B cell (primary cell): ENCODE measurements at regions of chr5 and their contacts with region 1.

Region 1: DNA sequence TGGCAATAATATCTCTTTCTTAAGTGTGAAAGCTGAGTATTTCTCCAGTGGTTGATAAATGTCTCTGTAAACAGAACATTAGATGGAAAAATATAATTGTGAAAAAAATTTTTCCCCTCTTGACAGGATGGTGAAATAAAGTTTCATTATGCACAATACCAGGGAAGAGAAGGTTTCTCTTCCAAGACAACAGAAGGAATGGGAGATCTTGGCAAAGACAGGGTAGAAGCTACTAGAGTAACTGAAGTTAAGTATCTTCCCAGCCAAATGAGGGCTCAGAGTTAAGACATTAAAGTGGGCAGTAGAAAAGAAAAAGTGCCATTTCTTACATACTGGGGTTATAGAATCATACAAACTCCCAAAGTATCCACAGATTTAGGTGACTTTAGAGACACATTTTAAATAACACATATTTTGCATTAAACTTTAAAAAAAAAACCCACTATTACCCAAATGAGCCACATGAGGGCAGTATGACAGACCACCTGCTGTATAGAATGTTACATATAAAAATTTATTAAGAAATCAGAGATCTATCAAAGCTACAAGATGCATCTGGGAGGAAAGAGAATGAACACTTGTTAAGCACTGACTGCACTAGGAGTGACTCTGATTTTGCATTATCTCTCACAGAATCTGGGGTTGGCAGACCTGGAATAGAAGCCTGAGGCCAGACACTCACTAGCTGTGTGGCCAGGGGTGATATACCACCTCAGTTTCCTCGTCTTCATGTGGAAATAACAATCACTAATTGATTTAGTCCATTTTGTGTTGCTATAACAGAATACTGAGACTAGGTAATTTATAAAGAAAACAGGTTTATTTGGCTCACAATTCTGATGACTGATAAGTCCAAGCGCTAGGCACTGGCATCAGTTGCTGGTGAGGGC is 98.5 kb downstream of the ARSB start:
- DNase-seq: peak; percentile 38
- ATAC-seq: no peak
- H3K4me3 ChIP-seq: no peak overlapping the region
- H3K4me3 Mint-ChIP-seq: no peak overlapping the region
- H3K27ac ChIP-seq: no peak overlapping the region
- H3K27ac Mint-ChIP-seq: peak overlapping the region; percentile 60
- H3K4me1 ChIP-seq: peaks cover 24 to 36% of the 10 kb centered on the region in 2 donors
- H3K4me1 Mint-ChIP-seq: peaks cover 36% of the 10 kb centered on the region
- H3K27me3 ChIP-seq: no peaks in the 10 kb centered on the region
- H3K27me3 Mint-ChIP-seq: no peaks in the 10 kb centered on the region
- CTCF ChIP-seq: peak; percentile 69

Region 2: DNA sequence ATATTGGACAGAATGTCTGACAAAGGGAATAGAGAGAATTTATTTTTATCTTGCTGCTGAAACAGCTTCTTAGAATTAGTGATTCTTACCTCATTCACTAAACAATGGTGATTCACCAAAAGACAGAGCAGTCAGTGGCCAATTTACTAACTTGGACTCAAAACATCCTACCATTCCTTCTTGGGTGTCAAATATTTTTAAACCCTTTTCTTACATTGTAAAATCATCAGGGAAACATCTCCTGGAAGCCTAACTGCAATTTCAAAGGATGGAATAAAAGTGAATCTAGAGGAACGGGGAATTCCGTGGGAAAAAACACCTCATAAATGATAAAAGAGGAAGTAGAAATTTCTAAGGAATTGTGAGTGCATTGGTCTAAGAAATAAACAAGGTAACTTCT is 335.7 kb before region 1 on chr5:
- CTCF ChIA-PET with region 1: no interaction called
- POLR2A ChIA-PET with region 1: no interaction called
- intact Hi-C with region 1: loop called (anchors 10 kb)
- DNase-seq: no peak
- ATAC-seq: no peak
- H3K4me3 ChIP-seq: no peak overlapping the region
- H3K4me3 Mint-ChIP-seq: no peak overlapping the region
- H3K27ac ChIP-seq: no peak overlapping the region
- H3K27ac Mint-ChIP-seq: no peak overlapping the region
- H3K4me1 ChIP-seq: peaks cover 7 to 14% of the 10 kb centered on the region in 2 donors
- H3K4me1 Mint-ChIP-seq: peaks cover 24% of the 10 kb centered on the region
- H3K27me3 ChIP-seq: no peaks in the 10 kb centered on the region
- H3K27me3 Mint-ChIP-seq: no peaks in the 10 kb centered on the region
- CTCF ChIP-seq: no peak

Region 3: DNA sequence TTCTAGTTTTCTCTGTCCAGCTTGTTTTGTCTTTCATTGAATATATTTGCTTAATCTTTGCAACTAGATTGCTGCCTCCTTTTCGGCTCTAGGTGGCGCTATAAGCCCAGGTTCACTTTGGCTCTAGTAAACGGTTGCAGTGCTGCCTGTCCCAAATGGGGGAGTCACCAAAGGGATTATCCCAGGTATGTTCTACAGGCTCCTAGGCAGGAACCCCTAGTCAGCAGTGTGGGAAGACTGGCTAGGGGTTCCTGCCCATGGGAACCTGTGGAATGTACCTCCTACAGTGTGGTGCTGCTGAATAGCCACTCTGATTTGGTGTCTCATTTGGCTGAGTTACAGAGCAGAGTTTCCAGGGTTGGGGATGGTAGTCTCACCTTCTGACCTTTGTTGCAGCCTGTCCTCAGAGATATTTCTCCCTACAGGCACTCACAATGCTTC is 13.4 kb after region 1 on chr5:
- CTCF ChIA-PET with region 1: interaction called, 15 read pairs
- POLR2A ChIA-PET with region 1: no interaction called
- intact Hi-C with region 1: no loop called
- DNase-seq: no peak
- ATAC-seq: no peak
- H3K4me3 ChIP-seq: no peak overlapping the region
- H3K4me3 Mint-ChIP-seq: no peak overlapping the region
- H3K27ac ChIP-seq: no peak overlapping the region
- H3K27ac Mint-ChIP-seq: no peak overlapping the region
- H3K4me1 ChIP-seq: no peaks in the 10 kb centered on the region
- H3K4me1 Mint-ChIP-seq: peaks cover 2% of the 10 kb centered on the region
- H3K27me3 ChIP-seq: no peaks in the 10 kb centered on the region
- H3K27me3 Mint-ChIP-seq: no peaks in the 10 kb centered on the region
- CTCF ChIP-seq: no peak